Cardiac septum (tissue), 1 donor: ENCODE measurements at regions of chr16 and their contacts with region 1.

Region 1: DNA sequence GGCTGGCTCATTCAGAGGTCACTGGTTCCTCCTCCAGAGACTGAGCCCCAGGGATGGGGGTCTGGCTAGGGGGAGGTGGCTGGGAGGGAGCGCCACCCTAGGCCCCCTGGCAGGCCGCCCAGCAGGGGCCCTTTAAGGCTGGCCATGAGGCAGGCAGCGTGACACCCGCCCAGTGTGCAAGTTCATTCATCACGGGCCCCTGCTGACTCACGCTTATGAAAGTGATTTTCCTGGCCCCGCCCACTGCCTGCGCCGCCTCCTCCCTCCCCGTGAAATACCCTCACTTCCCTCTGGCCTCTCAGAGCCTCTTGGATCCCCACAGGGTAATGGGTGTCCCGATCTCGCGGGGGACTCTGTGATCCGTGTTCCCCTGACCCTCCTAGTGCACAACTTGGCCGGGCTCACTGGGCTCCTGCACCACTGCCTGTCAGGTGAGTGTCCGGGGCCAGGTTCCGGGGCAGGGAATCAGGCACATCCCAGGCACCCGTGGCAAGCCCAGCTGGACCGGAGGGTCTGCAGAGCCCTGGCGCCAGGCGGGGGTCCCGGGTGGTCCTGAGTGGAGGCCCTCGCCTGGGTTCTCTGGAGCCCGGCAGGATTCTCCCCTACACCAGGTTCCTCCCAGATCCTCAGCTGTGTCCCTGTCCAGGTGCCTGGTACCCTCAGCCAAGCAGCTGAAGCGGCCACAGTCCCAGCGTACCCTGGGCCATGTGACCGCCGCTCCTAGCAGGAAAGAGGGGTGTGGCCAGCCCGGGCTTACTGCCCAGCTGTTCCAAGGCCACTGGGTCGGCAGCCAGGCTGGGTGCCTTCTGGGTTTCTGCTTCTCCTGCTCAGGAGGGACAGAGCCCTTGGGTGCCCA is at the start of gene OSGIN1:
- DNase-seq: peak; percentile 97
- total RNA-seq, gene OSGIN1: 12.6 TPM

Region 2: DNA sequence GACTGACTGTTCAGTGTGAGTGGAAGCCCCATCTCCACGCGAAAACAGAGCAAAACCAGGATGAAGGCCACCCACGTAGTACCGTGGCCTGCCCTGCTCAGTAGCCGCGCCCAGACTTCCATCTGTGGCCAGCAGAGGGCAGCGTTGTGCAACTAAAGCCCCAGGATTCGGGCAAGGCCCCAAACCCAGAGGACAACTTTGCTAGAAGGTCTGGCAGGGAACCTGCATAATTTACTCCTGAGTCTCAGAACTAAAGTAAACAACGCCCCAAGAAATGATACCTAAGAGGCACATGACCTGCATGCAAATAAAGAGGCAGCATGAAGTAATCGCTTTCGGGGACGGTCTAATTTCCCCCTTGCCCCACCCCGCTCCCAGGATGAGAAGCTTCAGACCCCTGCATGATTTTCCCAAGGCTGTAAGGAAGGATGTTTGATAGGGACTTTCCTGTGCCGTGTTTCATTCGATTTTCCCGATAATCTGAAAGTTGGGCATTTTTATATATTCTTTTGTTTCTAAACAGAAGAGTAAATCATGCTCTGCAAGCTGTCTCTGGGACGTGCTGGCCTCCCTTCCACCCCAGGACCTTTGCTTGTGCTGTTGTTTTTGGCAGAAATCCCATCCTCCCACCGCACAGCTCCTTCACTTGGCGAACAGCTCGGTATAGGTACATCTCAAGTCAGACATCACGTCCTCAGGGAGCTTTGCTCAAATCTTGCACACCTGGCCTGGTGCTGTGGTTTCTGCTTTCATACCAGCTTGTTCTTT is 126.8 kb before region 1 on chr16:
- intact Hi-C with region 1: loop called (anchors 10 kb)
- DNase-seq: peak; percentile 92

Region 3: DNA sequence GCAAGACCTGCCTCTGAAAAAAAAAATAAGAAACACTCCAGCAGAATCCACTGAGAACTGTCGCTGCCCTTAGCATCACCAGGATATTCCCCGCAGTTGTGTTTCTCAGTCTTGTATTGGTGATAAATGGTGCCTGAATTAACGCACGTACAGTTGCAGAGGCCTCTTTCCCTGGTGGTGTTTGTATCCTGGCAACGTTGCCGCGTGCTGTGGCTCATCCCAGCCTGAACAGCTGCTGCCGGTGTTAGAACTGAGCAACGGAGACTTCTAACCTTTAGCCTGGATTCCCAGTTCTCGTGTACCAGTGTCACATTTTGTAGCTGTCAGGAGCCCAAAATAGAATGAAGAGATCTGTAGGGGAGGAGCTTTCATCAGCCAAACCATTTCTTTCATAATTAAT is 49.4 kb before region 1 on chr16:
- intact Hi-C with region 1: loop called (anchors 2 kb)
- DNase-seq: peak; percentile 84

Region 4: GRCh38 chr16:83913245-83913633 is 39.9 kb before region 1 on chr16:
- intact Hi-C with region 1: loop called (anchors 1 kb)
- DNase-seq: peak; percentile 87

Region 5: DNA sequence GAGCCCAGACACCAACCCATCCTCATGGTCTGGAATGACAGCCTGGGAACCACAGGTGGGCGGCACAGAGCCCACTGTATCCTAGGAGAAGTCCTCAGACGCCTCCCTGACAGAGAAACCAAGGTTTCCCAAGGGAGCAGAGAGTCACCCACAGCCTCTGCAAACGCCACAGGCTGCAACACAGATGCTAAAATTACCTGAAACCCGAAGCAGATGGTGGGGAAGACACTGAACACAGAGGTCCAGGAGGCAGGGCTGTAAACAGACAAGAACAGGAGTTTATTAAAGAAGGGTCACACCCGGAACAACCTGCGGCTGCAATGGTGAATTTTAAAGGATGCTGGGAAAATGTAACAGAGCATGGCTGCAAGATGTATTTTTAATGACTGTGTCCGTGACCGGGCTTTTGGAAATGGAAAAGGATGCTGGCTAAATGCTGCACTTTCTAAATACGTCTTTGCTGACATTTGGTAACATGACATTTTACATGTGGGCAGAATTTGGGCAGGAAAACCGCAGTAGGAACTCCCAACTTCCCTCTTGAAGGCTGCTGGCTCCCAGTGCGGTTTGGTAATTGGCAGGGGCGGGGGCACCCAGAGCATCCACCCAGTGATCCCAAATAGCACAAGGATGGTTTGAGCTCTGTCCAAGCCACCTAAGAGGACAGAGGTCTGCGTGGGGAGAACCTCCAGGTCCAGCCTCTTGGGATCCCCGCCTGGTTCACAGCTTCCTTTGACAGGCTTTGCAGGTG is 76.3 kb after region 1 on chr16:
- intact Hi-C with region 1: no loop called
- DNase-seq: no peak

Region 6: GRCh38 chr16:84040823-84041820 is 88.0 kb after region 1 on chr16:
- intact Hi-C with region 1: no loop called
- DNase-seq: no peak

Region 7: GRCh38 chr16:84062734-84063640 is 109.8 kb after region 1 on chr16:
- intact Hi-C with region 1: loop called (anchors 2 kb)
- DNase-seq: peak; percentile 91

Region 8: GRCh38 chr16:84175350-84176081 is 222.3 kb after region 1 on chr16:
- intact Hi-C with region 1: loop called (anchors 5 kb)
- DNase-seq: no peak

Region 9: GRCh38 chr16:84186685-84187437 is 233.7 kb after region 1 on chr16 and contains the start of gene TAF1C:
- intact Hi-C with region 1: no loop called
- DNase-seq: peak; percentile 95
- total RNA-seq, gene TAF1C: 20.9 TPM